Ovary (tissue), 10 donors: ENCODE measurements at regions of chr20 and their contacts with region 1.

Region 1: GRCh38 chr20:54093423-54094267 is 23.3 kb upstream of the BCAS1 start:
- DNase-seq: no peak
- H3K4me3 ChIP-seq: no peak overlapping the region
- H3K27ac ChIP-seq: no peak overlapping the region
- H3K4me1 ChIP-seq: no peaks in the 10 kb centered on the region
- H3K27me3 ChIP-seq: no peaks in the 10 kb centered on the region
- CTCF ChIP-seq: no peak
- EP300 ChIP-seq: no peak
- POLR2A ChIP-seq: no peak

Region 2: DNA sequence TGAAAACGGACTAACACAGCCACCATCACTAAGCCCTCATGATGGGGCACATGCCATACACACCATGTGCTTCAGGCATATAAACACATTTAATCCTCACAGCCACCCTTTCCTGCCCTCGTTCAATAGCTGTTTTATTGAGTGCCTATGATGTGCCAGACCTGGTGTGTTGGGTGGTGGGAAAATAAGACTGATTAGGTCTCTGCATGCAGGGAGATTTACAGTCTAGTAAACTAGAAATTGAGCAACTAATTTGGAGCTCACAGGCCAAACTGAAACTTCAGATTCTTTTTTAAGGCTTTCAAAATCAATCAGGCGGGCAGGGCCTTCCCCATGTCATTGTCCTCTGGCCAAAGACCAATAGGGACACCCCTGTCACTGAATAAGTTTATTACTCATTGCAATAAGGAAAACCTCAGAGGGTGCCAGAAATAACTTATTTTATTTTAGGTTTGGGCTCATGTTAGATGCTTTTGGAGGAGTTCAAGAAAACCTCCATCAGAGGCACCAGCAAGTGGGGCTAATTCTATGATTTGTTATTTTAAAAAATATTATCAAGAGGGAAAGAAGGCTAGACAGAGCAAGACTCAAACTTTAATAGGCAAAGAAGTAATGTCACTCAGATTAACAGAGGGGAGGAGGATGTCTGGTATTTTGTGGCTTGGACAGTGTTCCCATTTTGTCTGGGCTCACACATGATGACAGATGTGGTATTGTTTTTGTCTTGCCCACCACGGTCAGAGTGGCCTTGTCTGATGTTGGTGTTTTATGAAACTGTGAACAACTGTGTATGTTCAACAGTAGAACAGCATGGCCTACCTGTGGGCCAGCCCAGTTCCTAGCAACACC is 1914.1 kb before region 1 on chr20:
- intact Hi-C with region 1: no loop called
- DNase-seq: no peak
- H3K4me3 ChIP-seq: no peak overlapping the region
- H3K27ac ChIP-seq: no peak overlapping the region
- H3K4me1 ChIP-seq: no peaks in the 10 kb centered on the region
- H3K27me3 ChIP-seq: no peaks in the 10 kb centered on the region
- CTCF ChIP-seq: no peak
- EP300 ChIP-seq: no peak
- POLR2A ChIP-seq: no peak

Region 3: GRCh38 chr20:54014293-54014926 is 79.2 kb before region 1 on chr20:
- intact Hi-C with region 1: no loop called
- DNase-seq: no peak
- H3K4me3 ChIP-seq: no peak overlapping the region
- H3K27ac ChIP-seq: peak overlapping the region in 1 of 2 donors; percentile 2
- H3K4me1 ChIP-seq: peaks cover 1% of the 10 kb centered on the region
- H3K27me3 ChIP-seq: no peaks in the 10 kb centered on the region
- CTCF ChIP-seq: no peak
- EP300 ChIP-seq: no peak
- POLR2A ChIP-seq: no peak

Region 4: GRCh38 chr20:54148947-54149503 is 55.4 kb after region 1 on chr20:
- intact Hi-C with region 1: no loop called
- DNase-seq: no peak
- H3K4me3 ChIP-seq: no peak overlapping the region
- H3K27ac ChIP-seq: no peak overlapping the region
- H3K4me1 ChIP-seq: no peaks in the 10 kb centered on the region
- H3K27me3 ChIP-seq: no peaks in the 10 kb centered on the region
- CTCF ChIP-seq: no peak
- EP300 ChIP-seq: no peak
- POLR2A ChIP-seq: no peak

Region 5: GRCh38 chr20:54173653-54174456 is 80.2 kb after region 1 on chr20 and contains the start of gene CYP24A1:
- intact Hi-C with region 1: no loop called
- DNase-seq: no peak
- H3K4me3 ChIP-seq: no peak within 1 kb of the TSS
- H3K27ac ChIP-seq: no peak within 1 kb of the TSS
- H3K4me1 ChIP-seq: peaks cover 7% of the 10 kb centered on the region
- H3K27me3 ChIP-seq: no peaks in the 10 kb centered on the region
- CTCF ChIP-seq: no peak
- EP300 ChIP-seq: no peak
- POLR2A ChIP-seq: no peak
- total RNA-seq, gene CYP24A1: 0.15 to 3.7 TPM in 2 of 7 donors, not detected in the others

Region 6: DNA sequence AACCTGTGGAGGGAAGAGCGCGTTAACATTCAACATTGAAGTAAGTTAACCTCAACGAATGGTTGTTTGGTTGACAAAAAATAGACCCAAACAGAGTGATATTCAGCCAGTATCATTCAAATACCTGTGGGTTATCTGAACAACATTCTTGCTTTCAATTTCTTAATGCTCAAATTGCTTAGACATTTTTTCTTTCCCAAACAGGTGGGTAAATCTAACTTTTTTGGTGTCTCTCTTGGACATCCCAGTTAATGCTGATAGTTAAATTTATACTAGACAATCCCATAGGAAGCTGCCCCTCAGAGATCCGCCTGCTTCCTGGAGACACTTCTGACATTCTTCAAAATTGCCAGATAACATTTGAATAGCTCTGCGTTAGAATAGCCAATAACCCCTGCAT is 100.2 kb after region 1 on chr20:
- intact Hi-C with region 1: loop called in 2 of 4 experiments (anchors 2 to 10 kb)
- DNase-seq: no peak
- H3K4me3 ChIP-seq: no peak overlapping the region
- H3K27ac ChIP-seq: no peak overlapping the region
- H3K4me1 ChIP-seq: peaks cover 2% of the 10 kb centered on the region
- H3K27me3 ChIP-seq: no peaks in the 10 kb centered on the region
- CTCF ChIP-seq: no peak
- EP300 ChIP-seq: no peak
- POLR2A ChIP-seq: no peak

Region 7: DNA sequence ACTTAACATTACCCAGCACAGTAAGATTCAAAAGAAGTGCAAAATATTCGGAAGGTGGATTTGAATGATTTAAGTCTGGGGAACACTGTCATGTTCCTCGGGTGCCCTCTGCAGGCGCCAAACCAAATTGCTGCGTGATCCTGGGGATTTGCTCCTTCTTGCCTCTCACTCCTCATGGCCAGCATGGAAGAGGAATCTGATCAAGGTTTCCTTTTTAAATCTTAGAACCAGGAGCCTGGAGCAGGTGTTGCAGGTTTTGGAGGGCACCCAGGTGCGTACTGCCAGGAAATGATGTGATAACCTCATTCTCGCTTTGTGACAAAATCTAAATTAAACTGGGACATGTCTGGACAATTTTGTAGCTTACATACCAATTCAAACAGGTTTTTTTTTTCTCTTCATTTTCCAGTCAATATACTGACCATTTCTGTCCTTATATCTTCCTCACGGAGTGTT is 106.1 kb after region 1 on chr20:
- intact Hi-C with region 1: loop called in 1 of 4 experiments (anchors 10 kb)
- DNase-seq: peak; percentile 36 to 77 (median 72)
- H3K4me3 ChIP-seq: no peak overlapping the region
- H3K27ac ChIP-seq: no peak overlapping the region
- H3K4me1 ChIP-seq: no peaks in the 10 kb centered on the region
- H3K27me3 ChIP-seq: no peaks in the 10 kb centered on the region
- CTCF ChIP-seq: peak; percentile 28 to 62 (median 54)
- EP300 ChIP-seq: no peak
- POLR2A ChIP-seq: no peak